ENCODE measurements at regions of chr6 and their contacts with region 1.

Region 1: GRCh38 chr6:168884646-168885086 is 369.0 kb downstream of the THBS2 start:
- DNase-seq: peak in 1 of 2 donors; percentile 84
- H3K4me3 ChIP-seq: peak overlapping the region; percentile 42 to 53
- H3K27ac ChIP-seq: no peak overlapping the region
- H3K4me1 ChIP-seq: no peaks in the 10 kb centered on the region
- H3K27me3 ChIP-seq: no peaks in the 10 kb centered on the region
- CTCF ChIP-seq: peak; percentile 93 to 99 (median 94)

Region 2: DNA sequence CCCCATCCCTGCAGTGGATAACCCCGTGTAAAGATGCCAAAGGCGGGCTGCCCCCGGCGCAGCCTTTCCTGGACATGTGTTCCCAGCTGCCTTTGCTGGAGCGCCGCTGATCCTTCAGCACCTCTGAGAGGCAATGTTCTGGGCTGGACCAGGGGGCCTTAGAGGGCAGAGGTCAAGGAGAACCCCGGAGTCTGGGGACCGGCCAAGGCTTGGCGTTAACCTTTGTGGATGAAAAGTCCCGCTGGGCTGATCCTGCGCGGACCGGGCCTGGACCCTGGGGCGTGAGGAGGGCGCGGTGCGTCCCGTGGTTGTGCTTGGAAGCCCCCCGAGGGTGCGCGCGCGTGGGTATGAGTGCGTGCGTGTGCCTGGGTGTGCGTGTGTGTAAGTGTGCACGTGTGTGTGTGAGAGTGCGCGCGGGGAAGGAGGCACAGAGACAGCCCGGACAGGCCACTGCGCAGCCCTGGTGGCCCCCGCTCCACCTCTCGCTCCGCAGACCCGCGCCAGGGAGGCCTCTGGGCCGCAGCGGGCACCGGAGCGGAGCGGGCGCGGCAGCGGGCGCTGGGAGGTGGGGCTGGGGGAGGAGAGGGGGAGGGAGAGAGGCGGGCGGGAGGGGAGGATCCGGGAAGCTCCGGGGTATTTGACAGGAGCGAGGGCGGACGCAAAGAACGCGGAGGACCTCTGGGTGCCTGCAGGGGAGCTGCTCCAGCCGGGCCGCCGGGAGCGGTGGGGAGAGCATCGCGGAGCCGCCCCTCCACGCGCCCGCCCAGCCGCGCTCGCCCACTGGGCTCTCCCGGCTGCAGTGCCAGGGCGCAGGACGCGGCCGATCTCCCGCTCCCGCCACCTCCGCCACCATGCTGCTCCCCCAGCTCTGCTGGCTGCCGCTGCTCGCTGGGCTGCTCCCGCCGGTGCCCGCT is 443.9 kb before region 1 on chr6 and contains the start of gene SMOC2:
- intact Hi-C with region 1: loop called (anchors 5 kb)
- DNase-seq: peak in 1 of 2 donors; percentile 72
- H3K4me3 ChIP-seq: peak within 1 kb of the TSS; percentile 59 to 93
- H3K27ac ChIP-seq: peak within 1 kb of the TSS; percentile 75 to 88
- H3K4me1 ChIP-seq: peaks cover 8 to 16% of the 10 kb centered on the region in 2 donors
- H3K27me3 ChIP-seq: no peaks in the 10 kb centered on the region
- CTCF ChIP-seq: no peak
- total RNA-seq, gene SMOC2: 102 TPM

Region 3: GRCh38 chr6:168526841-168527281 is 357.8 kb before region 1 on chr6:
- intact Hi-C with region 1: loop called (anchors 10 kb)
- DNase-seq: peak in 1 of 2 donors; percentile 83
- H3K4me3 ChIP-seq: no peak overlapping the region
- H3K27ac ChIP-seq: peak overlapping the region; percentile 90 to 95
- H3K4me1 ChIP-seq: peaks cover 14 to 32% of the 10 kb centered on the region in 2 donors
- H3K27me3 ChIP-seq: no peaks in the 10 kb centered on the region
- CTCF ChIP-seq: no peak

Region 4: GRCh38 chr6:168616816-168617765 is 267.6 kb before region 1 on chr6:
- intact Hi-C with region 1: loop called (anchors 1 kb)
- DNase-seq: no peak
- H3K4me3 ChIP-seq: no peak overlapping the region
- H3K27ac ChIP-seq: peak overlapping the region; percentile 7 to 48
- H3K4me1 ChIP-seq: peaks cover 0 to 12% of the 10 kb centered on the region in 2 donors
- H3K27me3 ChIP-seq: no peaks in the 10 kb centered on the region
- CTCF ChIP-seq: peak; percentile 13 to 51 (median 24)

Region 5: DNA sequence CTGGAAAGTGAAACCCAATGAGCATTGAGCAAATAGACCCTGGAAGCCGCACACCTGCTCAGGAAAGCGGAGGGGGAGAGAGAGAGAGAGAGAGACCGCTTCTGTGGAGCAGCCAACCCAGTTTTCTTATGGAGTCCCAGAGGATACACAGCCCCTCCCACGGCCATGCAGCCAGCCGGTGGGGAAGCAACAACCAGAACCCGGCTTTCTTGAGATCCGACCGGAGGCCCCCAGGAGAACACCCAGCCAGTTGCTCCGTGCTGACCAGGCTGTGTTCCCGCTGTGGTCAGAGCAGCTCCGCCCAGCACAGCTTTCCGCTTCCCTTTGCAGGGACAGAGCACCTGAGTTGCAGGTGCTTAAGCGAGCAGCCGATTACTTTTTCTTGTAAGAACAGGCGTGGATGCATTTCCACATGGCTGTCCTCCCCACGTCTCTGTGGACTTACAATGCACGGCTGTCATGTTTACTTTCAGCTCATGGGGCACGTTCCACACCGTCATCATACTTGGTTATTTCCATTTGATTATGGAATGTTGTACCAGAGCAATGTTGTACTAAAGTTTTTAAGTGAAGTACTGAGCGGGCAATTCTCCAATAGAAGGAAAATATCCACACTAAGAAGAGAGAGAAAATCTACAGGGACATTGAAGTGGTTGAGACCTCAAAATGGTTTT is 12.9 kb before region 1 on chr6:
- intact Hi-C with region 1: no loop called
- DNase-seq: no peak
- H3K4me3 ChIP-seq: no peak overlapping the region
- H3K27ac ChIP-seq: no peak overlapping the region
- H3K4me1 ChIP-seq: no peaks in the 10 kb centered on the region
- H3K27me3 ChIP-seq: no peaks in the 10 kb centered on the region
- CTCF ChIP-seq: no peak